ENCODE measurements at regions of chrX and their contacts with region 1.

Region 1: DNA sequence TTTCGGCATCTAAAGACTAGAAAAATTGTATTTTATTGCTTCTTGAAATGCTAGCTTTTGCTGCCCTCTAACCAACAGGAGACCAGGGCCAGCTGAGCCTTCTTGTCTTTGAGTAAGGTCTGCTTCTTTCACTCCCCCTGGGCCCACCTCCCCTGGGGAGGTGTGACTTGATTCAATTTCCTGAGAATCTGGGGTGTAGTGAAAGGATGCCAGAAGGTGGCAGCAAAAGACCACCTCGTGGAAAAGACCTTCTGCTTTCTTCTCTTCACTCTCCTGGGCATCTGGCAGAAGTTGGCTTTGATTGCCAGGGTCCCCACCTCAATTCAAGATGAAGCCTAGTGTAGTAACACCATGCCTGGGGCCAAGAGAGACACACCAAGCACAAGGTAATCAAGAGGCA is 96.5 kb upstream of the MAOA start:
- DNase-seq: peak; percentile 33
- H3K4me3 ChIP-seq: no peak overlapping the region
- H3K27ac ChIP-seq: no peak overlapping the region
- H3K4me1 ChIP-seq: no peaks in the 10 kb centered on the region
- H3K27me3 ChIP-seq: no peaks in the 10 kb centered on the region
- CTCF ChIP-seq: peak; percentile 16 to 64 (median 48)
- POLR2A ChIP-seq: no peak

Region 2: GRCh38 chrX:43654431-43655150 is 94.9 kb after region 1 on chrX:
- intact Hi-C with region 1: loop called (anchors 10 kb)
- DNase-seq: peak; percentile 87
- H3K4me3 ChIP-seq: peak overlapping the region; percentile 54 to 56
- H3K27ac ChIP-seq: peak overlapping the region; percentile 84 to 85
- H3K4me1 ChIP-seq: no peaks in the 10 kb centered on the region
- H3K27me3 ChIP-seq: no peaks in the 10 kb centered on the region
- CTCF ChIP-seq: peak in 1 of 4 experiments; percentile 25
- POLR2A ChIP-seq: peak; percentile 90

Region 3: GRCh38 chrX:43750248-43750676 is 190.6 kb after region 1 on chrX:
- intact Hi-C with region 1: loop called (anchors 5 kb)
- DNase-seq: peak; percentile 54
- H3K4me3 ChIP-seq: no peak overlapping the region
- H3K27ac ChIP-seq: no peak overlapping the region
- H3K4me1 ChIP-seq: no peaks in the 10 kb centered on the region
- H3K27me3 ChIP-seq: no peaks in the 10 kb centered on the region
- CTCF ChIP-seq: peak in 3 of 4 experiments; percentile 52 to 66 (median 62)
- POLR2A ChIP-seq: no peak

Region 4: DNA sequence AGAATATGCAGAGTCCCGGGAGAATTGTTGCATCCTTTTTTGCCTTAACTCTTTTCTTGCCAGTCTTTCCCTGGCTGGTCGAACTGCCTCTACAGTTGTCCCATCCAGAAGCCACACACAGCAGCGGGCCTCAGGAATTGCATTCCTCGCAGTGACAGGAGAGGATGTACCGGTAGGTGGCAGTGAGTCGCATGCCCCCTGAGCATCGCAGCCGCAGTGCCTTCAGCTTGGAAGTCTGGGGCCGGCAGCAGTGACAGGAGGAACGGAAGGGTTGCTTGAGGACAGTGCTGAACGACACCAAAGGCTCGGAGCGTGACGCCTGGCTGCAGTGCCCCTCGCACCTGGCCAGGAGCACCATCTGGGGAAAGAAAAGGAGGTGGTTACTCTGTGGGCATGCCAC is 390.0 kb after region 1 on chrX:
- intact Hi-C with region 1: loop called (anchors 10 kb)
- DNase-seq: no peak
- H3K4me3 ChIP-seq: no peak overlapping the region
- H3K27ac ChIP-seq: no peak overlapping the region
- H3K4me1 ChIP-seq: no peaks in the 10 kb centered on the region
- H3K27me3 ChIP-seq: no peaks in the 10 kb centered on the region
- CTCF ChIP-seq: no peak
- POLR2A ChIP-seq: no peak

Region 5: DNA sequence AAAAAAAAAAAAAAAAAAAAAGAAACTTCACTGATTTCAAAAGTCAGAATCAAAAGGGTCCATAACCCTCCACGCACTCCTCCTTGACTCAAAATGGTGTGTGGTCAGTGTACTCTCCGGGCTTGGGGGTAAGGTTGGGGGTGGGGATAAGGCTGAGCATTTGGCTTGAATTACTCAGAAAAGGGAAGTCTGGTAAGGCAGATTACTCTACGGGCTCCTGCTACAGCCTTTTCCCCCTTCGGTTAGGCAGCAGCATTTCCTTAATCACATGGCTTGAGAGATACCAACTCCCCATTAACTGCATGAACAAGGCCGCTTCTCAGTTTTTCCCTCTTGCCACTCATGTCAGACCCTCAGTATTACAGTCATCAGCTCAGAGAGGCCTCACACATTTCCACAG is 1148.8 kb after region 1 on chrX:
- intact Hi-C with region 1: no loop called
- DNase-seq: no peak
- H3K4me3 ChIP-seq: no peak overlapping the region
- H3K27ac ChIP-seq: no peak overlapping the region
- H3K4me1 ChIP-seq: no peaks in the 10 kb centered on the region
- H3K27me3 ChIP-seq: no peaks in the 10 kb centered on the region
- CTCF ChIP-seq: no peak
- POLR2A ChIP-seq: no peak